ENCODE measurements at regions of chr5 and their contacts with region 1.

Region 1: DNA sequence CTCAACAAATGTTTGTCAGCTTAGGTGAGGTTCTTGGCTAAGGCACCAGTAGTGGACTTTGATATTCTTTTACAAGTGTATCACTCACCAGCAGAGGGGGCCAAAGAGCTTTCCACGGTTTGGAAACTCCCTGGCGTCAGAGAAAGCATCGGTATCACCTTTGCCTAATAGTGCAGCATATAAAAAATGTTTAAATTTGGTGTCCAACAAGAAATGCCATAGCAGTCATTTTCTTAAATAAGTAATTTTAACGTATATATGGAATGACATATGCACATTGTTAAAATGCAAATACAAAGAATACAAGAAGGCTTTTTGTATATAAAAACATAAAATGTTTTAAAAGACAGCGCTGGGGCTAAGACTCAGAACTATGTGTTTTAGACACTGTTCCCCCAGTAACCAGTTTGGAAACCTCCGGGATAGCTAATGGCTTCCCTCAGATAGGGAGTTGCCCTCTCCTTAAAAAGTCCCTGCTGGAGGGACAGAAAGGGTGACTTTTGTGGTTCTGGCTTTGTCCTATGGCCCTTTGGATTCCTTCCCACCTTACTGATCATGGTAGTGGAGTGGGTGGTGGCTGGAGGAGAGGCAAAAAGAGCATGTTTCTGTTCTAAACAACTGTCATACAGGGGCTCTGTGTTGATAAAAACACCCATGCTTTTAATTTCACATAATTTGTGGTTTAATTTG is 124.6 kb downstream of the GPBP1 start:
- DNase-seq: peak; percentile 98
- H3K4me3 ChIP-seq: no peak overlapping the region
- H3K27ac ChIP-seq: peak overlapping the region; percentile 6
- H3K4me1 ChIP-seq: no peaks in the 10 kb centered on the region
- H3K27me3 ChIP-seq: no peaks in the 10 kb centered on the region
- CTCF ChIP-seq: peak; percentile 69

Region 2: DNA sequence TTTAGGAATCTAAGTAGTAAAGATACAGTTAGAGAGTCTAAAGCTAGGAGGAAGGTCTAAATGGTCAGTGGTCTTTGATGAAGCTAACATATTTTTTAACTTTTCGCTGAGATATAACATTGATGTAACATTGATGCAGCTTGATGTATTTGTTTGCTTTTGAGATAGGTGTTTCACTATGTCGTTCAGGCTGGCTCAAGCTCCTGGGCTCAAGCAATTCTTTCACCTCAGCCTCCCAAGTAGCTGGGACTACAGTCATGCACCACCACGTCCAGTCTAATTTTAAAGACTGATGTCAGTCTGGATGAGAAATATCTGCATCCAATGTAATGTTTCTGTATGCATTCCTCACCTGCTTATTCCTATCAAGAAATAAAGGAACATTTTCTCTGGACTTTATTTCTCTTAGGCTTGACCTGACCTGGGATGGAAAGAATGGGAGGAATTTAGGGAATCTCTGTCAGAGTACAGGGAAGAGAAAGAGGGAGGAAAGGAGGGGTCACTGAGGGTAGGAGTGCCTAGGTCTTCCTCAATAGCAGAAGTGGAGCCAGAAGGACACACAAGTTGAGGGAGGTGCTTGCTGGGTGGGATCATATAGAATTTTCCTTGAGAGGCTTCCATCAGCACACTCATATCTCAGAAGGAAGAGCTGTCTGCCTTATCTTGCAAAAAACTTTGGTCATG is 226.1 kb before region 1 on chr5:
- intact Hi-C with region 1: no loop called
- DNase-seq: no peak
- H3K4me3 ChIP-seq: no peak overlapping the region
- H3K27ac ChIP-seq: no peak overlapping the region
- H3K4me1 ChIP-seq: no peaks in the 10 kb centered on the region
- H3K27me3 ChIP-seq: no peaks in the 10 kb centered on the region
- CTCF ChIP-seq: no peak

Region 3: DNA sequence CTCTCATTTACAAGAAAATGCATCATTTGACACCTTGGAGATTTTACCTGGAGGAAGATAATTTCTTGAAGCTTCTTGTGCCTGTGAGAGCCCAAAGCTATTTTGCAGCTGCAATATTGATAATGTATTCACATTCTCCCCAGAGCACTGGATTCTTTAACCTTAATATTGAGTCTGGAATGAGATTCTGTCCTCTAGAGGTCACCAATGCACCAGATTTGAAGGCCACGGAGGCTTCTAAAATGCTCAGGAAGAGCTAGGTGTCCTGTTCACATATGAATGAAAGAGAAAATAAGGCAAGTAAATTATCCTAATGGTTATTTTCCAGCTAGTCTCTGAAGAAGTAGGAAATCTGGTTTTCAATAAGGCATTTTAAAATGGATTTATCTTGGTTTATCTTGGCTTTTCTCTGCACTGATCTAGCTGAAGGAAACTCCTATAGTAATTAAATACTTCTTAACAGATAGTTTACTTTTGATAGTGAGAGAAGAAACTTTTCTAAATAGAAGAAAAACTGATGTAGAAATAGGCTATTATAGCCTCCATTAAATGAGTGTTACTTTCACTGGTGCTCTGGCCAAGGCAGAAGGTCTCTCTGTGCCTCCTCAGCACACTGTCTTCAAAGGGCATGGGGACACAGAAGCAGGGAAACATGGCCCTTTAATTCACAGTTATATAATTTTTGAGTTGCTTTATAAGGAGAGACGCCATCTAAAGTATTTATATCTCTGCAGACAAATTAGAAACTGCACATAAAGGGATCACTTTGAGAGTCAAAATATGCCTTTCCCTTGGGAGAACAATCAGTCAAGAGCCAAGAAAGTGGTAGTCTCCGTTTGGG is 481.2 kb after region 1 on chr5:
- intact Hi-C with region 1: loop called (anchors 5 kb)
- DNase-seq: peak; percentile 36
- H3K4me3 ChIP-seq: no peak overlapping the region
- H3K27ac ChIP-seq: no peak overlapping the region
- H3K4me1 ChIP-seq: no peaks in the 10 kb centered on the region
- H3K27me3 ChIP-seq: no peaks in the 10 kb centered on the region
- CTCF ChIP-seq: peak; percentile 62

Region 4: GRCh38 chr5:57887851-57888621 is 589.6 kb after region 1 on chr5:
- intact Hi-C with region 1: loop called (anchors 10 kb)
- DNase-seq: peak; percentile 45
- H3K4me3 ChIP-seq: no peak overlapping the region
- H3K27ac ChIP-seq: no peak overlapping the region
- H3K4me1 ChIP-seq: no peaks in the 10 kb centered on the region
- H3K27me3 ChIP-seq: no peaks in the 10 kb centered on the region
- CTCF ChIP-seq: peak; percentile 52

Measured in colonic mucosa (tissue), 4 donors.